Ovary (tissue), 10 donors: ENCODE measurements at regions of chr3 and their contacts with region 1.

Region 1: GRCh38 chr3:141000027-141000663 is 51.0 kb upstream of the SPSB4 start:
- DNase-seq: peak; percentile 29 to 72 (median 58)
- H3K4me3 ChIP-seq: no peak overlapping the region
- H3K27ac ChIP-seq: no peak overlapping the region
- H3K4me1 ChIP-seq: no peaks in the 10 kb centered on the region
- H3K27me3 ChIP-seq: no peaks in the 10 kb centered on the region
- CTCF ChIP-seq: peak in 2 of 3 donors; percentile 30 to 51
- EP300 ChIP-seq: no peak
- POLR2A ChIP-seq: no peak

Region 2: DNA sequence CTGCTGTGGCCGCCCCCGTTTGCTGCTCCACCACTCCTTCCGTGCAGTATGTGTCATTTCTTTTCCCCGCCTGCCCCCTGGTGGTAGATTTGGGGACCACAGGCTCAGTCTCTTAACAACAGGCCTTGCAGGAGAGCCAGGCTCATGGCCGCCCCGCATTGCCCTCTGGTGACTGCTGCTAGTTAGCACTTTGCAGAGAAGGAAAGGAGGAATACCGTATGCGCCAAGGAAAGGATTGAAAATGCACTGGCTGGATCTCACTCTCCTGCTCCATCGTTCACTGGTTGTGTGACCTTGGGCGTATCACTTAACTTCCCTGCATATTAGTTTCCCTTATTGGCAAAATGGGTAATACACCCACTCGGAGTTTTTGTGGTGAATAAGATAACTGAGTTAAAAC is 192.2 kb after region 1 on chr3:
- intact Hi-C with region 1: loop called (anchors 2 to 5 kb)
- DNase-seq: peak; percentile 92 to 99 (median 97)
- H3K4me3 ChIP-seq: no peak overlapping the region
- H3K27ac ChIP-seq: no peak overlapping the region
- H3K4me1 ChIP-seq: no peaks in the 10 kb centered on the region
- H3K27me3 ChIP-seq: no peaks in the 10 kb centered on the region
- CTCF ChIP-seq: peak; percentile 83 to 98 (median 98)
- EP300 ChIP-seq: no peak
- POLR2A ChIP-seq: no peak